ENCODE measurements at regions of chr13 and their contacts with region 1.

Region 1: DNA sequence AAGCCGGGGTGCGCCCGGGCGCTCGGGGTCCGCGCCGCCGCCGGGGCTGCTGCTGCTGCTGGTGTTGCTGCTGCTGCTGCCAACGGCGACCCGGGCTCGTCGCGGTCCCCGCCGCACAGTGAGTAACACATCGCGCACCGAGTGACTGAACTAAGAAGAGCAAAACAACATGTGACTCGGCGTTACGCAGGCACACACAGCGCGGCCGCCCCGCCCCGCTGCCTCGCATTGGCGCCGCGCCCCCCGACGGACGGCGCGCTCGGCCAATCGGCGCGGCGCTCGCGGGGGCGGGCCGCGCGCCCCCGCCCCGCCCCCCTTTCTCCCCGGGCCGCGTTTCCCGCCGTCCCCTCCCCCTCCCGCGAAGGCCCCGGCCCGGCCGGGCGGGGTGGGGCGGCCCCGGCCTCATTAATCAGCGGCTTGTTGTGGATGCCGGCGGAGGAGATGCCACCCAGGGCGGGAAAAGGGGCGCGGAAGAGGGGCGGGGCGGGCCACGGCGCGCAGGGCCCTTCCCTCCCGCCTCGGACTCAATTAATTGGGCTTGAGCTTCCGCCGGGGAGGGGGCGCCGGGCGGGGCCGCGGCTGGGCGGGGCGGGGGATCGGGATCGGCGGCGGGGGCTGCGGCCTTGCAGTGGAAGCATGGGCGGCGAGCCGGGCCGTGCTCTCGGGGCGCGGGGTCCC is at the start of gene IRS2:
- DNase-seq: peak; percentile 97
- H3K4me3 ChIP-seq: peak within 1 kb of the TSS; percentile 84
- H3K27ac ChIP-seq: peak within 1 kb of the TSS; percentile 94
- H3K4me1 ChIP-seq: peaks cover 32% of the 10 kb centered on the region
- H3K27me3 ChIP-seq: no peaks in the 10 kb centered on the region
- CTCF ChIP-seq: no peak
- total RNA-seq, gene IRS2: 135 TPM in 2 replicates

Region 2: DNA sequence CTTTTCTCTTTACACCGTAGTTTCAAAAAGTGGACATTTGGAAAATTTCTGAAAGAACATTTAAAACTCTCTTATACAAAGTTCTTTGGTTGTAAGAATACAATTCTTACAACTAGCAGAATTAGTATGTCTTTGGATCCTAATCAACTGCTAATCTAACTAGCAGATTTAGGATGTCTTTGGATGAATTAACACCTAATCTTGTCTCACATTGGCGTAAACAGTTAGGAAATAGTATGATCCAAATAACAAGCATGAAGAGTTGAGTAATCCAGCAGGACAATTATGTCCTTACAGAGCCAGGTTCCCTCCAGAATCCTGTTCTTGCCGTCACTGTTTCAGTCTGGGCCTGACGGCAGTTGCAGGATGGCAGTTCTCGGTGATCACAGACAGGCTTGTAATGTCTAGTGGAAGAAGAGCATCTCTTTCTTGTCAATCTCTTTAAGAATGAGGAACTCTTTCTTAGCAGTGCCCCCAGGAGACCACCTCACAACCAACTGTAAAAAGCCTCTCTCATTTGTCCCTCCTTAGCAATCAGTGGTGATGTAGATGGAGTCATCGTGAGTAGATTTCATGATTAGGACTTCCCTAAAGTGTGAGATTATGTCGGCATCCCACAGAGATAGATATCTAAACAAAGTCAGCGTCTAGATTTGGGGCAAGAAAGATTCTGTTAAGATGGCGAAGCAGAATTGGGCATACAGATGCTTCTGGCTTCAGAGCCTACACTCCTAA is 1522.8 kb before region 1 on chr13:
- CTCF ChIA-PET with region 1: no interaction called
- POLR2A ChIA-PET with region 1: no interaction called
- intact Hi-C with region 1: loop called (anchors 5 kb)
- DNase-seq: peak; percentile 32
- H3K4me3 ChIP-seq: no peak overlapping the region
- H3K27ac ChIP-seq: no peak overlapping the region
- H3K4me1 ChIP-seq: peaks cover 44% of the 10 kb centered on the region
- H3K27me3 ChIP-seq: no peaks in the 10 kb centered on the region
- CTCF ChIP-seq: no peak

Region 3: DNA sequence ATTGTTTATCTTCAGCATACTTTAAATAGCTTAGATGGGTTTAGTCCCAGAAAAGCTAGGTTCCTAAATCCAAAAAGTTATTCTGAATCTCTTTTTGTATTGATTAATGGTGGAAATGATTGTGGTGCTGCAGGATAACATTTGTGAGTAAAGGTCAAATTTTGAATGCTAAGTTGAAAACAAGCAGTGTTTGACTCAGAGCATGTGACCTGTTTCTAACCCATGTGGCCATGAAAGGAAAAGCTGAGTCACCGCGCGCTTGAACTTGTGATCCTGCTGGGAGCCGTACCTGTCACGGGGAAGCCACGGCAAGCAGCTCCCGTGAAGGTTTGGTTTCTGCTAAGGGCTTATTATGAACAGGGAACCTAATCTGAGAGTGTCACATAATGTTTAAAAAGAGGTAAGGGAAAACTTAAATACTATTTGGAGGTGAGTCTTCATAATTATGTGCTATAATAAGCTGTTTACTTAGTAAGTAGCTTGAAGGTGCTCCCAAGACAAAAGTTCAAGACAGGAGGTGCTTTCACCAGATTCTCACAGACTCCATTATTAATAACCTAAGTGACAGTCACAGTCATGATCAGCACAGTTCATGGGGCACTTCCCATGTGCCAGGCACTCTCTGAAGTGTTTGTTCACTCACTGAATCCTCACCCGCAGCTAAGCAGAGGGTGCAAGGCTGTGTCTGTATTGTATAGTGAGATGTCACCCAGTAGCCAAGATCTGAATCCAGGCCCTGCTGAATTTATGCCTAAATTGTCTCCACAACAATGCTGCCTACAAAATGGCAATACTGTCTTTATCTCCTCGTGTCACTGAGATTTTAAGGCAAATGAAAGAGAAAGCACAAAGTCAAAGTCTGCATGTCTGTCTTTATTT is 870.7 kb before region 1 on chr13:
- CTCF ChIA-PET with region 1: interaction called, 6 read pairs
- POLR2A ChIA-PET with region 1: no interaction called
- intact Hi-C with region 1: loop called (anchors 2 kb)
- DNase-seq: peak; percentile 62
- H3K4me3 ChIP-seq: peak overlapping the region; percentile 4
- H3K27ac ChIP-seq: peak overlapping the region; percentile 61
- H3K4me1 ChIP-seq: peaks cover 36% of the 10 kb centered on the region
- H3K27me3 ChIP-seq: no peaks in the 10 kb centered on the region
- CTCF ChIP-seq: no peak

Region 4: DNA sequence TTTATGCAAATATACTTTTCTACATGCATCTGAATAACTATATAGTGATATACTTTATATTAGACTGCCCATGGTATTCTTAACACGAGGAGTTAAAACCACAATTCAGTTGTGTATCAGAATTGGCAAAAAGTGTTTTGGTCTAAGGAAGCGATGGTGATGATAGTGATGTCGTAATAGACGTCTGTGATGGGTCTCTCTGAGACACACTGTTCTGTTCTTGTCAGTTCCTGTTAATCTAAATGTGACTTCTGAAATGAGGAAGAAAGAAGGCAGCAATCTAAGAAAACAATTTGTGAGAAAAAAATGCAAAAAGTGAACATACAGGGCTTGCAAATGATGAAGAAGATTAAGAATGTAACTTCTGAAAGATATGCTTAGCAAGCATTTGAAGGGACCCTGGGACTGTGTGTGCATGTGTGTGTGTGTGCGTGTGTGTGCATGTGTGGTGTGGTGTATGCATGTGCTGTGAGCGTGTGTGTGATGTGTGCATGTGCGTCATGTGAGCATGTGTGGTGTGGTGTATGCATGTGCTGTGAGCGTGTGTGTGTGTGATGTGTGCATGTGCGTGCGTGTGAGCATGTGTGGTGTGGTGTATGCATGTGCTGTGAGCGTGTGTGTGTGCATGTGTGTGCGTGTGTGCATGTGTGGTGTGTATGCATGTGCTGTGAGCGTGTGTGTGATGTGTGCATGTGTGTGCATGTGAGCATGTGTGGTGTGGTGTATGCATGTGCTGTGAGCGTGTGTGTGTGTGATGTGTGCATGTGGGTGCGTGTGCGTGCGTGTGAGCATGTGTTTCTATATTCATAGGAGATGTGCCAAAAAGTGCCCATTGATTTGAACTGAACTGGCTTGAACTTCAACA is 132.0 kb before region 1 on chr13:
- CTCF ChIA-PET with region 1: no interaction called
- POLR2A ChIA-PET with region 1: no interaction called
- intact Hi-C with region 1: loop called (anchors 5 kb)
- DNase-seq: peak; percentile 63
- H3K4me3 ChIP-seq: no peak overlapping the region
- H3K27ac ChIP-seq: peak overlapping the region; percentile 94
- H3K4me1 ChIP-seq: peaks cover 67% of the 10 kb centered on the region
- H3K27me3 ChIP-seq: no peaks in the 10 kb centered on the region
- CTCF ChIP-seq: no peak

Region 5: GRCh38 chr13:110108347-110109174 is 322.0 kb after region 1 on chr13:
- CTCF ChIA-PET with region 1: no interaction called
- POLR2A ChIA-PET with region 1: no interaction called
- intact Hi-C with region 1: loop called (anchors 2 kb)
- DNase-seq: peak; percentile 85
- H3K4me3 ChIP-seq: no peak overlapping the region
- H3K27ac ChIP-seq: no peak overlapping the region
- H3K4me1 ChIP-seq: peaks cover 12% of the 10 kb centered on the region
- H3K27me3 ChIP-seq: no peaks in the 10 kb centered on the region
- CTCF ChIP-seq: peak; percentile 76

Region 6: GRCh38 chr13:110433014-110433413 is 646.4 kb after region 1 on chr13:
- CTCF ChIA-PET with region 1: no interaction called
- POLR2A ChIA-PET with region 1: no interaction called
- intact Hi-C with region 1: no loop called
- DNase-seq: no peak
- H3K4me3 ChIP-seq: no peak overlapping the region
- H3K27ac ChIP-seq: no peak overlapping the region
- H3K4me1 ChIP-seq: no peaks in the 10 kb centered on the region
- H3K27me3 ChIP-seq: no peaks in the 10 kb centered on the region
- CTCF ChIP-seq: no peak